ENCODE measurements at regions of chr6 and their contacts with region 1.

Region 1: DNA sequence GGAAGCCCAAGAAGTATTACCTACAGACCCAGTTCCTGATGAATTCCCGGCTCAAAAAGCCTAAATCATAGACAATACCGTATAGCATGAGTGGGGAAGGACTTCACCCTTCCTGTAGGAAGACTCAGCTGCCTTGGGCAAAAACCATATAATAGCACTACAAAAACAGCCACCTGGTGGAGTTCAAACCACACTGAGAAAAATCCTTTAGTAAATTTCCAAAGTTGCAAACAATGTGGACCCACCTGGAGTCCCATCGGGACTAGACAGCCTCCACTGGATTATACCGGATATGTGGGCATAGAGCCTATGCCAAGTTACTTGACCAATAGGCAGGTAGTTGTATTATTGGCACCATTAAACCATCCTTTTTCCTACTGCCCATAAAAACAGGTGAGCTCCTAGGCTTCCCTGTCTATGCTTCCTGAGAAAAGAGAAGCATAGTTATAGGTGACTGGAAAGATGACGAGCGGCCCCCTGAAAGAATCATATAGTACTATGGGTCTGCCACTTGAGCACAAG is 51.8 kb upstream of the ADGRF4 start:
- DNase-seq: no peak
- ATAC-seq: no peak
- H3K4me3 ChIP-seq: no peak overlapping the region
- H3K27ac ChIP-seq: no peak overlapping the region
- H3K4me1 ChIP-seq: peaks cover 7% of the 10 kb centered on the region
- H3K27me3 ChIP-seq: no peaks in the 10 kb centered on the region
- CTCF ChIP-seq: no peak

Region 2: DNA sequence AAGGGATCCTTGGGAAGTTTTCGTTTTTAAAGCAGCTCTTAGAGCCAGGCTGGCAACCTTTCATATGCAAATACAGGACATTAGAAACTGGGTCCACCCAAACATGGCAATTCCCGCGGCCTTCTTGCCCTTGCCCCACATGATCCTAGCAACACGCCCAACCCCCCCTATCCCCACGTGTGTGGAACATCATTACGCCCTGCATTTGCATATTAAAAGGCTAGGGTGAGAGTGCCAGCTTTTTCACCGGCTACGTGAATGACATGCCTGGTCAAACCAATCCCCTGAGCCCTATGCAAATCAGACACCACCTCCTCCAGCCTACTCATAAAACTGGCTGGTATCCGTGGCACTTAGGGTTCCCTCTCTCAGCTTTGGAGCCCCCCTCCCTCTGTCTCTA is 425.1 kb before region 1 on chr6:
- intact Hi-C with region 1: no loop called
- DNase-seq: no peak
- ATAC-seq: no peak
- H3K4me3 ChIP-seq: no peak overlapping the region
- H3K27ac ChIP-seq: no peak overlapping the region
- H3K4me1 ChIP-seq: no peaks in the 10 kb centered on the region
- H3K27me3 ChIP-seq: no peaks in the 10 kb centered on the region
- CTCF ChIP-seq: no peak

Region 3: GRCh38 chr6:47603995-47604394 is 42.6 kb before region 1 on chr6:
- intact Hi-C with region 1: no loop called
- DNase-seq: no peak
- ATAC-seq: no peak
- H3K4me3 ChIP-seq: no peak overlapping the region
- H3K27ac ChIP-seq: no peak overlapping the region
- H3K4me1 ChIP-seq: no peaks in the 10 kb centered on the region
- H3K27me3 ChIP-seq: no peaks in the 10 kb centered on the region
- CTCF ChIP-seq: no peak

Region 4: DNA sequence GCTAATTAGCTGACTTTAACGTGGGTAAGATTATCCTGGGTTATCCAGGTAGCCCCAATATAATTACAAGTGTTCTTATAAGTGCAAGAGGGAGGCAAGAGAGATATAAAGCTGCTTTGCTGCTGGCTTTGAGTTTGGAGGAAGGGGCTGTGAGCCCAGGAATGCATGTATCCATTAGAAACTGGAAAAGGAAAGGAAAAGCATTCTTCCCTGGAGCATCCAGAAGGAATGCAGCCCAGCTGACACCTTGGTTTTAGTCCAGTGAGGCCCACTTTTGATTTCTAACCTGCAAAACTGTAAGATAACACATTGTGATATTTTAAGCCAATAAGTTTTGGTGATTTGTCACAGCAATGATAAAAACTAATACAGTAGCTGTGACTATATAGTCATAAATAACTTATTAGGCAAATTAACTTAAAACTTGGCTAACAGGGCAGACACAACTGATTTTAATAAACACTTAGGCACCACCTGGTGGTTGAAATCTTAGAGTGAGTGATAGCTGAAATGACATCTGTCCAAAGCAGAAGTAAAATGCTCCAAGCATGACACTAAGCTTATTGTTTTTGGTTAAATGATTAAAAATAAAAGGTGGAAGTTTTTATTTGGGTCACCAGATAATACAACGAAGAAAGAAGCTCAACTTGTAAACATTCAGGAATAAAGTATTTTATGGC is 87.4 kb after region 1 on chr6:
- intact Hi-C with region 1: loop called in 1 of 2 experiments (anchors 5 kb)
- DNase-seq: no peak
- ATAC-seq: peak in 3 of 4 donors; percentile 41 to 70 (median 46)
- H3K4me3 ChIP-seq: no peak overlapping the region
- H3K27ac ChIP-seq: no peak overlapping the region
- H3K4me1 ChIP-seq: peaks cover 2% of the 10 kb centered on the region
- H3K27me3 ChIP-seq: no peaks in the 10 kb centered on the region
- CTCF ChIP-seq: peak; percentile 47